Spleen (tissue), 13 donors: ENCODE measurements at regions of chr1 and their contacts with region 1.

Region 1: DNA sequence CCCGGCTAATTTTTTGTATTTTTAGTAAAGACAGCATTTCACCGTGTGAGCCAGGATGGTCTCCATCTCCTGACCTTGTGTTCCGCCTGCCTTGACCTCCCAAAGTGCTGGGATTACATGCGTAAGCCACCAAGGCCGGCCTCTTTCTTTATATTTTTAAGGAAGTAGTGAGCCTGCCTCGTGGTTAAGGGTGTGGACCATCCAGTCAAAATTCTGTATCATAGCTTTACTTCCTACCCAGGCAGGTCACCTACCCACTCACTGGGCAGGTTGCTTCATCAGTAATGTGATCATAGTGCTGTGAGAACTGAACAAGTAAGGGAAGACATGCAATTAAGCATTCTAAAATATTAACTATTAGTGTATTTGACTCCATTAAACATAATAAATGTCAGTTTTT is 8.1 kb upstream of the ACOT7 start:
- DNase-seq: no peak
- H3K4me3 ChIP-seq: no peak overlapping the region
- H3K27ac ChIP-seq: no peak overlapping the region
- H3K4me1 ChIP-seq: peaks cover 0 to 40% (median 16%) of the 10 kb centered on the region in 6 donors
- H3K27me3 ChIP-seq: peaks cover 0 to 13% (median 0%) of the 10 kb centered on the region in 7 donors
- CTCF ChIP-seq: no peak
- POLR2A ChIP-seq: no peak

Region 2: GRCh38 chr1:6239213-6239752 is 162.4 kb before region 1 on chr1:
- intact Hi-C with region 1: no loop called
- DNase-seq: no peak
- H3K4me3 ChIP-seq: no peak overlapping the region
- H3K27ac ChIP-seq: no peak overlapping the region
- H3K4me1 ChIP-seq: peaks cover 11 to 37% (median 31%) of the 10 kb centered on the region in 6 donors
- H3K27me3 ChIP-seq: peaks cover 3 to 68% (median 59%) of the 10 kb centered on the region in 7 donors
- CTCF ChIP-seq: no peak
- POLR2A ChIP-seq: no peak

Region 3: GRCh38 chr1:6359216-6360116 is 42.2 kb before region 1 on chr1:
- intact Hi-C with region 1: loop called (anchors 5 kb)
- DNase-seq: peak; percentile 89
- H3K4me3 ChIP-seq: peak overlapping the region in 3 of 8 donors; percentile 4 to 46 (median 8)
- H3K27ac ChIP-seq: peak overlapping the region; percentile 61 to 89 (median 86)
- H3K4me1 ChIP-seq: peaks cover 28 to 73% (median 45%) of the 10 kb centered on the region in 6 donors
- H3K27me3 ChIP-seq: no peaks in the 10 kb centered on the region
- CTCF ChIP-seq: peak in 1 of 11 experiments; percentile 26
- POLR2A ChIP-seq: no peak

Region 4: GRCh38 chr1:6998267-6998666 is 596.6 kb after region 1 on chr1:
- intact Hi-C with region 1: no loop called
- DNase-seq: peak; percentile 31
- H3K4me3 ChIP-seq: no peak overlapping the region
- H3K27ac ChIP-seq: no peak overlapping the region
- H3K4me1 ChIP-seq: no peaks in the 10 kb centered on the region
- H3K27me3 ChIP-seq: no peaks in the 10 kb centered on the region
- CTCF ChIP-seq: no peak
- POLR2A ChIP-seq: no peak